Naive thymus-derived CD8-positive, alpha-beta T cell (primary cell): ENCODE measurements at regions of chr3 and their contacts with region 1.

Region 1: DNA sequence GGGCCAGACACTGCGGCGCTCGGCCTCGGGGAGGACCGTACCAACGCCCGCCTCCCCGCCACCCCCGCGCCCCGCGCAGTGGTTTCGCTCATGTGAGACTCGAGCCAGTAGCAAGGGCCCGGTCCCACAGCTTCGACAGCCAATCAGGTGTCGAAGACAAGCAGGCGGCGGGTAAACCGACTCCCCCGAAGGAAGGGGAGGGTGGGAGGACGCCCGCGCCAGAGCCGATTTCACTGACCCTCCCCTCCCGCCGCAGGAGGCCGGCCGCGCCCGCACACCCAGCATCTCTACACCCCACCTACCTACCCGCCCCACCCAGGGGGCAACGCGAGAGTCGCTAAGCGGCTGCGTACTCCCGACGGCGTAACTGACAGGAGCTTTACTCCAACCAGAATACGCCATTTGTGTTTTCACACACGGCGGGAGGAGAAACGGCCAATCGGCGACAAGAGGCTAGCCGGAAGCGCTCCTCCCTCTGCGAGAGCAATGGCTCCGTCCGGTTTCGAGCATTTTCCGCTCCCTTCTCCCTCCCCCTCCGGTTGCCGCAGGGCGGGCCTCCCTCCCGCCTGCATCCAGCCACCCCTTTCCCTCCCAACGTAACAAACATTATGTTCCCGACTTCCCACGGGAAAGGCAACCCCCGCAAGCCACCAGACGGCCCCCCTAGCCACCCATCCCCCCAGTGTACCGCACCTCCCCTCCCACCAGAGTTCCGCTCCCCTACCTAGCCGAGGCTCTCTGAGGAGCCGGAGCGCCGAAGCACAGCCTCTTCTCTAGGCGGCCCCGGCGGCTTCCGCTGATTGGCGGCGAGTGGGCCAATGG is 504 bp upstream of the SETD5 start:
- DNase-seq: peak; percentile 96 to 100 (median 99)
- ATAC-seq: peak; percentile 70 to 71
- H3K4me3 Mint-ChIP-seq: peak overlapping the region; percentile 90 to 99 (median 96)
- H3K27ac Mint-ChIP-seq: peak overlapping the region; percentile 96 to 99 (median 98)
- H3K4me1 Mint-ChIP-seq: peaks cover 46 to 78% (median 71%) of the 10 kb centered on the region in 4 donors
- H3K27me3 Mint-ChIP-seq: peaks cover 0 to 4% (median 0%) of the 10 kb centered on the region in 5 donors

Region 2: GRCh38 chr3:9249273-9250192 is 147.4 kb before region 1 on chr3 and contains the start of gene SRGAP3:
- POLR2A ChIA-PET with region 1: no interaction called
- DNase-seq: peak; percentile 44 to 88 (median 76)
- ATAC-seq: peak; percentile 99 to 100
- H3K4me3 Mint-ChIP-seq: peak within 1 kb of the TSS; percentile 80 to 95 (median 92)
- H3K27ac Mint-ChIP-seq: peak within 1 kb of the TSS; percentile 30 to 90 (median 70)
- H3K4me1 Mint-ChIP-seq: peaks cover 10 to 22% (median 20%) of the 10 kb centered on the region in 4 donors
- H3K27me3 Mint-ChIP-seq: peaks cover 0 to 6% (median 0%) of the 10 kb centered on the region in 5 donors
- polyA plus RNA-seq, gene SRGAP3: 0.73 to 2.5 (median 1.1) TPM

Region 3: GRCh38 chr3:9373465-9373864 is 23.4 kb before region 1 on chr3:
- POLR2A ChIA-PET with region 1: interaction called, 34 read pairs
- DNase-seq: peak in 1 of 10 donors; percentile 9
- ATAC-seq: peak in 1 of 2 donors; percentile 32
- H3K4me3 Mint-ChIP-seq: peak overlapping the region in 9 of 10 donors; percentile 12 to 50 (median 29)
- H3K27ac Mint-ChIP-seq: peak overlapping the region in 7 of 10 donors; percentile 34 to 75 (median 56)
- H3K4me1 Mint-ChIP-seq: peaks cover 20 to 57% (median 44%) of the 10 kb centered on the region in 4 donors
- H3K27me3 Mint-ChIP-seq: no peaks in the 10 kb centered on the region

Region 4: DNA sequence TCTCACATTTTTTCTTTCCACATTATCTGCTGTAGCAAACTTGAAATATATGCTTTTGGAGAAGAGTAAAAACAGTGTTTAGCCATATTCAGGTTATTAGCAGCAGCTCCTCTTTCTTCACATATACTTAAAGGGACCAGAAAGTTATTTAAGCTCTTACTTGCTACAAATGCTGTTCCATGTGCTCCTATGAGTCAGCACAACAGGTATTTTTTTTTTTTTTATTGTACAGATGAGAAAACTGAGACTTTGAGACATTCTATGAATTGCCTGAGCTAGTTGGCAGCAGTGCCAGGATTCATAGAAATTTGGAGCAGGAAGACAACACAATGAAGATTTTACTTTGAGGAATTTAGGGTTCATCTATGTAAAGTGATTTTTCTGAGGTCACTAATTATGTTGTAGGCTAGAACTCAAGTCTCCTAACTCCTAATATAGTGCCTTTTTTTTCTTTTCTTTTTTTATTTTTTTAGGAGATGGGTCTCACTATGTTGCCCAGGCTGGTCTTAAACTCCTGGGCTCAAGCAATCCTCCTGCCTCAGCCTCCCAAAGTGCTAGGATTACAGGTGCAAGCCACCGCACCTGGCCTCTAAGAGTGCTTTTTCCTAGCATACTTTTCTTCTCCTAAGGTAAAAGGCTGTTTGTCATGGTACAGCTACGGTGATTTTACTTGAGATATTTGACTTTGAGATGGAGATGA is 24.1 kb after region 1 on chr3:
- POLR2A ChIA-PET with region 1: interaction called, 14 read pairs
- DNase-seq: no peak
- ATAC-seq: no peak
- H3K4me3 Mint-ChIP-seq: peak overlapping the region in 2 of 10 donors; percentile 10 to 15
- H3K27ac Mint-ChIP-seq: peak overlapping the region; percentile 42 to 91 (median 70)
- H3K4me1 Mint-ChIP-seq: peaks cover 25 to 58% (median 51%) of the 10 kb centered on the region in 4 donors
- H3K27me3 Mint-ChIP-seq: no peaks in the 10 kb centered on the region

Region 5: GRCh38 chr3:9569054-9569453 is 172.1 kb after region 1 on chr3:
- POLR2A ChIA-PET with region 1: no interaction called
- DNase-seq: no peak
- ATAC-seq: no peak
- H3K4me3 Mint-ChIP-seq: no peak overlapping the region
- H3K27ac Mint-ChIP-seq: no peak overlapping the region
- H3K4me1 Mint-ChIP-seq: no peaks in the 10 kb centered on the region
- H3K27me3 Mint-ChIP-seq: peaks cover 17 to 27% (median 25%) of the 10 kb centered on the region in 5 donors

Region 6: DNA sequence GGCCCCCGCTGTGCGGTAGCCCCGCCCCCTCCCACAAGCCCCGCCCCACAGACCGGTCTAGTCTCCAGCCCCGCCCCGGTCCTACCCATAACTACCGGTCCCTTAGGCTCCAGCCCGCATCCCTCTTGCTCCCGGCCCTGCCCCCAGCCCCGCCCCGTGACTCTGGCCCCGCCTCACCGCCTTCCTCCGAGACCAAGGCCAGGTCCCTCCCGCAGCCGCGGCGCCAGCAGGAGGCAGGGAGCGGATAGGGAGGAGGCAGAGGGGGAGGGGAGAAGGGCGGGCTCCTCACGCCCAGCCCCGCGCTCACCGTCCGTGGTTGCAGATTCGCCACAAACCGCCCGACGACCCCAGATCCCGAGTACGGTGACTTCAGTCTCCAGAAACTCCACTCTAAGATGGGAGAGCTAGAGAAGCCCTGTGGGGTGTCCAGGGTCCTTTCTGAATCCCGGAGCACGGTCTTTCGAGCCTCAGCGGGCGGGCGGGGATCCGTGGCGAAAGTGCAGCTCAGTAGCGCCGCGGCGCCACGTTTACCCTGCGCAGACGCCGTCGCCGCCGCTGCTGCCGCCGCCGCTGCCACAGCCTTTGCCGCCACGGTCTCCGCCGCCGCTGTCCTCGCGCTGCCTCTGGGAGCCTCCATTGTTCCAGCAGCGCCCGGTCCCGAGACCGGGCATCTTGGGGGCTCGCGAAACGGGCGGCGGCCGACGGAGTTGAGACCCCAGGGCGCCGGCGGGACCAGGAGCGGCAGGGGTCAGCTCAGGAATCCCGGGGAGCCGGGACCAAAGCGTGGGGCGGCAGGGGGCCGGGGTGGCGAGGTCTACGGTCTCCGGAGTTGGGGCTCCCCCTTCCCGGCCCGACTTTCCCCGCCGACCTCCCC is 334.5 kb after region 1 on chr3 and contains the start of gene BRPF1:
- POLR2A ChIA-PET with region 1: interaction called, 15 read pairs
- DNase-seq: peak; percentile 95 to 99 (median 99)
- ATAC-seq: peak; percentile 93
- H3K4me3 Mint-ChIP-seq: peak within 1 kb of the TSS; percentile 84 to 99 (median 94)
- H3K27ac Mint-ChIP-seq: peak within 1 kb of the TSS; percentile 92 to 99 (median 95)
- H3K4me1 Mint-ChIP-seq: peaks cover 37 to 70% (median 63%) of the 10 kb centered on the region in 4 donors
- H3K27me3 Mint-ChIP-seq: no peaks in the 10 kb centered on the region
- polyA plus RNA-seq, gene BRPF1: 8.8 to 24.9 (median 10.8) TPM